CD4-positive, alpha-beta memory T cell (primary cell): ENCODE measurements at regions of chr16 and their contacts with region 1.

Region 1: DNA sequence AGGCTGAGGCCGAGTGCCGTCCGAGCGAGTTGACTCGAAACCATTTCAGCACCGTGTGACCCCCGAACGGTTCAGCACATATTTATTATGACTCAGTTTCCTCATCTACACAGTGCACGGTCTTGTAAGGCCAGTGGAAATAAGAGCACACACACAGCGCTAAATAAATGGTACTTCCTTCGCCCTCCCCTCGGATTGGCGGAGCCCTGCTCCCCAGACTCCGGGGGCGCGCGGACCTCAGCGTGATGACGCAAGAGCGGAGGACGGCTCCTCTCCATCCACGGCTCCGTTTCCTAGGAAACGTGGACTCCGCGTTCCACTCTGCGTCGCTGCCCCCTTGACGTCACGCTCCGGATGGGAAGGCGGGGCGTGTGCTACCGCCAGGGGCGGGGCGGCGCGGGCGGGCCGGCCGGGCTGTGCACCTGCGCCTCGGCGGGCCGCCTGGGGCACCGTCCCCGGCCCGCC is at the start of gene PARD6A:
- DNase-seq: peak; percentile 94 to 97 (median 96)
- H3K4me3 ChIP-seq: peak within 1 kb of the TSS; percentile 98 to 100
- H3K4me3 Mint-ChIP-seq: peak within 1 kb of the TSS; percentile 93 to 98 (median 95)
- H3K27ac ChIP-seq: peak within 1 kb of the TSS; percentile 98
- H3K27ac Mint-ChIP-seq: peak within 1 kb of the TSS; percentile 97 to 99 (median 98)
- H3K4me1 ChIP-seq: peaks cover 27% of the 10 kb centered on the region
- H3K4me1 Mint-ChIP-seq: peaks cover 10 to 48% (median 20%) of the 10 kb centered on the region in 4 donors
- H3K27me3 ChIP-seq: no peaks in the 10 kb centered on the region
- H3K27me3 Mint-ChIP-seq: no peaks in the 10 kb centered on the region
- total RNA-seq, gene PARD6A: 7.4 to 8.8 TPM

Region 2: DNA sequence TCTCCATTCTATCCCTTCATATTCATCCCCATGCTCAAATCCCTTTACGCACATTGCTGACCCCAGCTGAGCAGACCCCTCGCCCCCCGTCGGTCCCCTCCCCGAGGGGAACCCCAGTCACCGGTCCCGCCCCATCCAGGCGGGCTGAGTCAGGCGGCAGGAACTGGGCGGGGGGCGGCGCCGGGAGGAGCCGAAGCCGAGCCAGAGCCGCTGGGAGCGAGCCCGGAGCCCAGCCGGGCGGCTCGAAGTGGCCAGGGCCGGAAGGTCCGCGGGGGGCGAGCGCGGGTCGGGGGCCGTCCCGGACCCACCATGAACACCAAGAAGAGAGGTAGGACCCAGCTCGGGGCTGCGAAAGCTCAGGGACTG is 123.3 kb before region 1 on chr16:
- CTCF ChIA-PET with region 1: interaction called, 4 read pairs
- POLR2A ChIA-PET with region 1: interaction called, 17 read pairs
- intact Hi-C with region 1: no loop called
- DNase-seq: peak in 3 of 5 donors; percentile 37 to 66 (median 38)
- H3K4me3 ChIP-seq: peak overlapping the region; percentile 42 to 72
- H3K4me3 Mint-ChIP-seq: peak overlapping the region; percentile 81 to 92 (median 86)
- H3K27ac ChIP-seq: peak overlapping the region; percentile 84
- H3K27ac Mint-ChIP-seq: peak overlapping the region; percentile 90 to 93 (median 92)
- H3K4me1 ChIP-seq: peaks cover 26% of the 10 kb centered on the region
- H3K4me1 Mint-ChIP-seq: peaks cover 18 to 60% (median 34%) of the 10 kb centered on the region in 4 donors
- H3K27me3 ChIP-seq: no peaks in the 10 kb centered on the region
- H3K27me3 Mint-ChIP-seq: no peaks in the 10 kb centered on the region

Region 3: DNA sequence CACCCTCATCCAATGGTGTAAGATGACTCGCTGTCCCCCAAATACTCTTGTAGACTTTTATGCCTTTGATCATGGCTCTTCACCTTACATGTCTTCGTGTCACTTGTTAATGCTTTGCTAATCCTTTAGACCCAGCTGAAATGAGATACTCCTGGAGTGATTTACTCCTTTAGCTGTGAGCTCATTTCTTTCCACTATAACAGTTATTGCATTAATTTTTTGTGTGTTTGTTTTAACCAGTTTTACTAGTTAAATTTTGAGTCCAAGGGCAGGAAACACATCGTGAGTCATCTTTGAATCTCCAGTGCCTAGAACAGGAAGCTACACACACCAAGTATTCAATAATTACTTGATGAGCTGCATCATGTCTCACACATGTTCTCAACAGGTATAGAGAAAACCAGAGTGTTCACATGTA is 104.8 kb before region 1 on chr16:
- CTCF ChIA-PET with region 1: interaction called, 12 read pairs
- POLR2A ChIA-PET with region 1: interaction called, 72 read pairs
- intact Hi-C with region 1: no loop called
- DNase-seq: peak; percentile 36 to 68 (median 40)
- H3K4me3 ChIP-seq: no peak overlapping the region
- H3K4me3 Mint-ChIP-seq: peak overlapping the region in 7 of 8 donors; percentile 18 to 83 (median 70)
- H3K27ac ChIP-seq: peak overlapping the region; percentile 54
- H3K27ac Mint-ChIP-seq: peak overlapping the region; percentile 79 to 93 (median 88)
- H3K4me1 ChIP-seq: peaks cover 57% of the 10 kb centered on the region
- H3K4me1 Mint-ChIP-seq: peaks cover 32 to 58% (median 41%) of the 10 kb centered on the region in 4 donors
- H3K27me3 ChIP-seq: no peaks in the 10 kb centered on the region
- H3K27me3 Mint-ChIP-seq: no peaks in the 10 kb centered on the region

Region 4: GRCh38 chr16:67672739-67673662 is 12.4 kb after region 1 on chr16:
- CTCF ChIA-PET with region 1: interaction called, 23 read pairs
- POLR2A ChIA-PET with region 1: interaction called, 6 read pairs
- intact Hi-C with region 1: no loop called
- DNase-seq: peak; percentile 40 to 60 (median 53)
- H3K4me3 ChIP-seq: no peak overlapping the region
- H3K4me3 Mint-ChIP-seq: no peak overlapping the region
- H3K27ac ChIP-seq: no peak overlapping the region
- H3K27ac Mint-ChIP-seq: peak overlapping the region in 6 of 7 donors; percentile 30 to 77 (median 36)
- H3K4me1 ChIP-seq: peaks cover 5% of the 10 kb centered on the region
- H3K4me1 Mint-ChIP-seq: peaks cover 4 to 21% (median 9%) of the 10 kb centered on the region in 4 donors
- H3K27me3 ChIP-seq: no peaks in the 10 kb centered on the region
- H3K27me3 Mint-ChIP-seq: no peaks in the 10 kb centered on the region

Region 5: GRCh38 chr16:67806428-67807147 is 146.0 kb after region 1 on chr16 and contains the starts of genes RANBP10 and TSNAXIP1:
- CTCF ChIA-PET with region 1: interaction called, 3 read pairs
- POLR2A ChIA-PET with region 1: interaction called, 12 read pairs
- intact Hi-C with region 1: loop called (anchors 2 kb)
- DNase-seq: peak; percentile 97 to 99 (median 99)
- H3K4me3 ChIP-seq: peak within 1 kb of the TSS; percentile 91 to 93
- H3K4me3 Mint-ChIP-seq: peak within 1 kb of the TSS; percentile 88 to 95 (median 90)
- H3K27ac ChIP-seq: peak within 1 kb of the TSS; percentile 95
- H3K27ac Mint-ChIP-seq: peak within 1 kb of the TSS; percentile 85 to 98 (median 95)
- H3K4me1 ChIP-seq: peaks cover 43% of the 10 kb centered on the region
- H3K4me1 Mint-ChIP-seq: peaks cover 26 to 52% (median 36%) of the 10 kb centered on the region in 4 donors
- H3K27me3 ChIP-seq: no peaks in the 10 kb centered on the region
- H3K27me3 Mint-ChIP-seq: no peaks in the 10 kb centered on the region
- total RNA-seq, gene RANBP10: 25.6 to 27.8 TPM
- total RNA-seq, gene TSNAXIP1: 0.44 to 0.64 TPM